Activated T-helper 1 cell treated with anti-CD3 and anti-CD28 coated beads, Interleukin-12 subunit alpha, Interleukin-12 subunit beta, Interleukin-2, Interleukin-4 antibody, amounts not matched to agents 30 ng/mL and 10 ng/mL and 1 ng/mL, durations not matched to agents 14 hours and 24 hours and 36 hours (primary cell): ENCODE measurements at regions of chr10 and their contacts with region 1.

Region 1: GRCh38 chr10:97445722-97446639 is at the starts of genes EXOSC1 and ZDHHC16:
- DNase-seq: peak; percentile 92
- H3K4me3 Mint-ChIP-seq: peak within 1 kb of the TSS; percentile 93
- H3K27ac Mint-ChIP-seq: peak within 1 kb of the TSS; percentile 92
- H3K4me1 Mint-ChIP-seq: peaks cover 47% of the 10 kb centered on the region
- H3K27me3 Mint-ChIP-seq: no peaks in the 10 kb centered on the region
- total RNA-seq, gene EXOSC1: 55.3 and 57.1 TPM in 2 replicates
- total RNA-seq, gene ZDHHC16: 48.3 and 48.8 TPM in 2 replicates

Region 2: DNA sequence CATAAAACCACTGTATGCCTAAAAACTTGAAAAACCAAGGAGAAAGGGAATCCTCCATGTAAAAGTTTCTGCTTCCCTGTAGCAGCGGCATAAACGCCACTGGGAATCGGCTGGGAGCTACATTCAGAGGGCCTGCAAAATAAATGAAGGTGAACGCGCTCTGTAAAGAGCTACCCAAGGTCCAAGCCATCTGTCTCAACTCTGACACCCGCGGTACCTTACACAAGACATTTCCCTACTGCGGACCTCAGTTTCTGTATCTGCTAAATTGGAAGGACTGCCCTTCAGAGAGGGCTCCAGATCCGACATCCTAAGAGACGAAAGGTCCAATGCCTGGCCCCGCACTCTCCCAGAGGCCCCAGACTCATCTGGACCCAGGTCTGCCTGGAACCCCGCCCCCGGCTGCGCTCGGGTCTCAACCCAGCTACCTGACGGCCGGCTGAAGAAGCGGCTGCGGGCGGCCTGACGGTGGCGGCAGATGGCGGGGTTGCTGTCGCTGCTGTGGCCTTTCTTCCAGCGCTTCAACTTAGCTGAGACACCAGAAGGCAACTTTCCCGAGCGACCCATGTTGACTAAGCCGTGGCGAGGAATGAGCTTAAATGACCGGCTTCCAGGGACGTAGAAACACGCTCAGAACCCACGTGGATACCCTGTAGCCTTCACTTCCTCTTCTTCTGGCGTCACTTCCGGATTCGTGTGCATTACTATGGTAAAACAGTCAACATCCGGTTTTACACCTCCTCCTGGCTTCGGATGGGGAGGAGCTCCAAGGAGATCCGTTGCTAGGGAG is 45.1 kb before region 1 on chr10 and contains the start of gene RRP12:
- intact Hi-C with region 1: loop called (anchors 1 kb)
- DNase-seq: peak; percentile 89
- H3K4me3 Mint-ChIP-seq: peak within 1 kb of the TSS; percentile 97
- H3K27ac Mint-ChIP-seq: peak within 1 kb of the TSS; percentile 87
- H3K4me1 Mint-ChIP-seq: peaks cover 17% of the 10 kb centered on the region
- H3K27me3 Mint-ChIP-seq: no peaks in the 10 kb centered on the region
- total RNA-seq, gene RRP12: 99.9 and 104 TPM in 2 replicates

Region 3: GRCh38 chr10:97412891-97413304 is 33.1 kb before region 1 on chr10:
- intact Hi-C with region 1: loop called (anchors 1 kb)
- DNase-seq: peak; percentile 52
- H3K4me3 Mint-ChIP-seq: peak overlapping the region; percentile 47
- H3K27ac Mint-ChIP-seq: peak overlapping the region; percentile 95
- H3K4me1 Mint-ChIP-seq: peaks cover 55% of the 10 kb centered on the region
- H3K27me3 Mint-ChIP-seq: no peaks in the 10 kb centered on the region

Region 4: GRCh38 chr10:97463363-97464132 is 17.6 kb after region 1 on chr10:
- intact Hi-C with region 1: loop called (anchors 1 kb)
- DNase-seq: peak; percentile 18
- H3K4me3 Mint-ChIP-seq: no peak overlapping the region
- H3K27ac Mint-ChIP-seq: no peak overlapping the region
- H3K4me1 Mint-ChIP-seq: no peaks in the 10 kb centered on the region
- H3K27me3 Mint-ChIP-seq: no peaks in the 10 kb centered on the region

Region 5: DNA sequence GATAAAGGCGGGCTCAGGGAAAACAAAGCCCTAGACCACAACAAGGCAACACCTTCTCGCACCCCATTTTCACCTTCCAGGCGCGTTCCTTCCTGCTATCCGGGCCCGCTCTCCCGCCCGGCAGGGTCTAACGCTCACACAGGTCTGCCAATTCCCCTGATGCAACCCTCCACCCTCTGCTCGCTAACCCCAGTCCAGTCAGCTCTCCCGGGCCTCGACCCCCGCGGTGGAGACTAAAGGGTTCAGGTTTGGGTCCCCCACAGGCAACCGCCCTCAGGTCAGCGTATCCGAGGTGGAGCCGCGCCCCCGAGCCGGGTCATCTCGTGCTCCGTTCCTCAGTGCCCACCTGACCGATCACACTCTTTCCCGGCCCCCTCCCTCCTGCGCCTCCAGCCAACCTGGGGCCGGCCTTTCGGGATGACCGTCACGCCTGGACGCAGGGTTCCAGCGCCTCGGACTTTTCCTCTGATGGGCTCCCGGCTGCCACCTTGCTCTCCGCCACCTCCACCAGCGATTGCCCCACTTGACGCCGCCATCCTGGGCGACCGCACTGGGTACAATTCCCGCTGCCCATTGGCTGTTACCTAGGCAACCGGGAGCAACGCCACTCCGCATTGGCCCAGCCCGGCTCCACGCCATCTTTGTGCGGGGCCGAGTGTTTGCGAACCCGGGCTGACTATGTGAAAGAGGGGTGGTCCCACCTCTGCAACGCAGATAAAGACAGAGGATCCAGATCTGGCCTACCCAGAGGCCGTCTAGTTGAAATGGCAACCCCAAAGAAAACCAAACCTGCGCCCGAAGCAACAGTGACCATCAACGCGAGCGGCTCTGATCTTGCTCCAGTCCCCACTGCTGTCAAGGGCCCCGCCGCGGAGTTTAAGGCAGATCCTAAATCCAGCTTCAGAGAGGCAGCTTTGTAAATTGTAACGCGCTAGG is 187.2 kb after region 1 on chr10 and contains the start of gene MORN4:
- intact Hi-C with region 1: loop called (anchors 2 kb)
- DNase-seq: peak; percentile 89
- H3K4me3 Mint-ChIP-seq: peak within 1 kb of the TSS; percentile 96
- H3K27ac Mint-ChIP-seq: peak within 1 kb of the TSS; percentile 89
- H3K4me1 Mint-ChIP-seq: peaks cover 19% of the 10 kb centered on the region
- H3K27me3 Mint-ChIP-seq: peaks cover 2% of the 10 kb centered on the region
- total RNA-seq, gene MORN4: 1.9 TPM in 2 replicates